PC-3 (cell line): ENCODE measurements at regions of chr12 and their contacts with region 1.

Region 1: DNA sequence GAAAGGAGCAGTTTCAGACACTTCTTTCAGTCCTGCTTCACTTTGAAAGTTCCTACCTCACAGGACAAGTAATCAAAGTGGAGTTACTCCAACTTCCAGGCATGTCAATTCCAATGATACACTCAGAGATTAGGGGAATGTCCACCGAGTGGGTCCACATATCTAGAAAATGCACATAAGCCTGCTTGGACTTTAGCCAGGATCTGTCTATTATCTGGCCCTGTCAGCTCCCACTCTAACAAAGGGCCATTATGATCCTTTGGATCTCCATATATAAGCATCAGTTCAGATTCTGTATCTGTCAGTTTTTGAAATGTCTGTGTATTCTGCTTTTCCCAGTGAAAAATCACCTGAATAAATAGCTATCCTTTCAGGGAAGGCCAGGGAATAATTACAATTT is 112.9 kb upstream of the ATXN7L3B start:
- DNase-seq: no peak
- ATAC-seq: no peak
- H3K4me3 ChIP-seq: no peak overlapping the region
- H3K27ac ChIP-seq: no peak overlapping the region
- H3K4me1 ChIP-seq: no peaks in the 10 kb centered on the region
- H3K27me3 ChIP-seq: no peaks in the 10 kb centered on the region
- CTCF ChIP-seq: no peak

Region 2: GRCh38 chr12:73815072-73815645 is 609.6 kb before region 1 on chr12:
- CTCF ChIA-PET with region 1: no interaction called
- POLR2A ChIA-PET with region 1: interaction called, 10 read pairs
- intact Hi-C with region 1: no loop called
- DNase-seq: no peak
- ATAC-seq: no peak
- H3K4me3 ChIP-seq: no peak overlapping the region
- H3K27ac ChIP-seq: no peak overlapping the region
- H3K4me1 ChIP-seq: no peaks in the 10 kb centered on the region
- H3K27me3 ChIP-seq: no peaks in the 10 kb centered on the region
- CTCF ChIP-seq: no peak